ENCODE measurements at regions of chr10 and their contacts with region 1.

Region 1: GRCh38 chr10:48656241-48656913 is 28.3 kb upstream of the WDFY4 start:
- DNase-seq: peak; percentile 90
- ATAC-seq: peak; percentile 91
- H3K4me3 ChIP-seq: peak overlapping the region; percentile 68
- H3K27ac ChIP-seq: no peak overlapping the region
- H3K4me1 ChIP-seq: peaks cover 11% of the 10 kb centered on the region
- H3K27me3 ChIP-seq: no peaks in the 10 kb centered on the region
- CTCF ChIP-seq: peak; percentile 86 to 100 (median 96); a peak in 5 of 6 replicates
- EP300 ChIP-seq: no peak
- POLR2A ChIP-seq: 0 out of 2 replicates have a peak, but pooled peaks have one; percentile 43
- RAD21 ChIP-seq: peak; percentile 93

Region 2: GRCh38 chr10:48444266-48444665 is 212.1 kb before region 1 on chr10:
- CTCF ChIA-PET with region 1: interaction called, 4 read pairs
- POLR2A ChIA-PET with region 1: no interaction called
- RAD21 ChIA-PET with region 1: interaction called, 19 read pairs
- SMC1A ChIA-PET with region 1: no interaction called
- in situ Hi-C with region 1: no loop called
- intact Hi-C with region 1: no loop called
- DNase-seq: no peak
- ATAC-seq: no peak; the same call in 1 of the 3 replicates
- H3K4me3 ChIP-seq: no peak overlapping the region
- H3K27ac ChIP-seq: no peak overlapping the region
- H3K4me1 ChIP-seq: no peaks in the 10 kb centered on the region
- H3K27me3 ChIP-seq: no peaks in the 10 kb centered on the region; a peak in 1 of 4 replicates
- CTCF ChIP-seq: peak in 2 of 3 experiments; percentile 20 to 33; a peak in 2 of 6 replicates
- EP300 ChIP-seq: no peak
- POLR2A ChIP-seq: no peak
- RAD21 ChIP-seq: 0 out of 2 replicates have a peak, but pooled peaks have one; percentile 23

Region 3: DNA sequence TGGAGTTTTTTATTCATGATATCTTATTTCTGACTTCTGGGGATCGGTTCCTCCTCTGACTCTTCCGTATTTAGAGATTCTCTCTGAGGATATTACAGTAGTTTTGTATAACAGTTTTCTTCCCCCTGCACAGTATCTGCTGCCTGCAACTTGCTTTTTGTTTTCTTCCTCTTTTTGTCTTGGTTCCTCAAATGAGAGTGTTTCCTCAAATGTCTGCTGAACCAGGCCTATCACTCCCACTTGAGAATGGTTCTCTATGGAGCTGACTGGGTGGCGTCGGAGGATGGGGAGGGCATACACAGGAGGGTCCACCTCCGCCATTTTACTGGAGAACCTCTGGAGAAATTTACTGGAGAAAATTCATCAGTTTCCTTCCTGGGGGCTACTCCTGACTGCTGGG is 79.2 kb before region 1 on chr10:
- CTCF ChIA-PET with region 1: interaction called, 25 read pairs
- POLR2A ChIA-PET with region 1: no interaction called
- RAD21 ChIA-PET with region 1: interaction called, 14 read pairs
- SMC1A ChIA-PET with region 1: interaction called, 6 read pairs
- in situ Hi-C with region 1: no loop called
- intact Hi-C with region 1: no loop called
- DNase-seq: no peak
- ATAC-seq: peak; percentile 68
- H3K4me3 ChIP-seq: no peak overlapping the region
- H3K27ac ChIP-seq: peak overlapping the region; percentile 43; the same call in 1 of the 2 replicates
- H3K4me1 ChIP-seq: peaks cover 34% of the 10 kb centered on the region
- H3K27me3 ChIP-seq: no peaks in the 10 kb centered on the region
- CTCF ChIP-seq: no peak
- EP300 ChIP-seq: no peak
- POLR2A ChIP-seq: no peak
- RAD21 ChIP-seq: no peak

Region 4: GRCh38 chr10:48634198-48634983 is 22.0 kb before region 1 on chr10:
- CTCF ChIA-PET with region 1: interaction called, 45 read pairs
- POLR2A ChIA-PET with region 1: interaction called, 3 read pairs
- RAD21 ChIA-PET with region 1: interaction called, 48 read pairs
- SMC1A ChIA-PET with region 1: interaction called, 50 read pairs
- in situ Hi-C with region 1: no loop called
- intact Hi-C with region 1: no loop called
- DNase-seq: peak; percentile 91
- ATAC-seq: peak; percentile 97
- H3K4me3 ChIP-seq: no peak overlapping the region
- H3K27ac ChIP-seq: peak overlapping the region; percentile 45
- H3K4me1 ChIP-seq: peaks cover 38% of the 10 kb centered on the region
- H3K27me3 ChIP-seq: no peaks in the 10 kb centered on the region
- CTCF ChIP-seq: no peak
- EP300 ChIP-seq: peak; percentile 35 to 41; a peak in 1 of 4 replicates
- POLR2A ChIP-seq: no peak
- RAD21 ChIP-seq: no peak

Region 5: GRCh38 chr10:48714088-48714487 is 57.7 kb after region 1 on chr10:
- CTCF ChIA-PET with region 1: interaction called, 221 read pairs
- POLR2A ChIA-PET with region 1: no interaction called
- RAD21 ChIA-PET with region 1: interaction called, 171 read pairs
- SMC1A ChIA-PET with region 1: interaction called, 17 read pairs
- in situ Hi-C with region 1: no loop called
- intact Hi-C with region 1: no loop called
- DNase-seq: no peak
- ATAC-seq: no peak
- H3K4me3 ChIP-seq: no peak overlapping the region
- H3K27ac ChIP-seq: no peak overlapping the region
- H3K4me1 ChIP-seq: no peaks in the 10 kb centered on the region
- H3K27me3 ChIP-seq: no peaks in the 10 kb centered on the region
- CTCF ChIP-seq: no peak
- EP300 ChIP-seq: no peak
- POLR2A ChIP-seq: no peak
- RAD21 ChIP-seq: no peak

Region 6: GRCh38 chr10:48938990-48939536 is 282.7 kb after region 1 on chr10:
- CTCF ChIA-PET with region 1: interaction called, 11 read pairs
- POLR2A ChIA-PET with region 1: no interaction called
- RAD21 ChIA-PET with region 1: interaction called, 3 read pairs
- SMC1A ChIA-PET with region 1: interaction called, 3 read pairs
- in situ Hi-C with region 1: no loop called
- intact Hi-C with region 1: no loop called
- DNase-seq: no peak
- ATAC-seq: no peak
- H3K4me3 ChIP-seq: no peak overlapping the region
- H3K27ac ChIP-seq: no peak overlapping the region
- H3K4me1 ChIP-seq: no peaks in the 10 kb centered on the region
- H3K27me3 ChIP-seq: no peaks in the 10 kb centered on the region
- CTCF ChIP-seq: no peak
- EP300 ChIP-seq: no peak
- POLR2A ChIP-seq: no peak
- RAD21 ChIP-seq: no peak

Region 7: DNA sequence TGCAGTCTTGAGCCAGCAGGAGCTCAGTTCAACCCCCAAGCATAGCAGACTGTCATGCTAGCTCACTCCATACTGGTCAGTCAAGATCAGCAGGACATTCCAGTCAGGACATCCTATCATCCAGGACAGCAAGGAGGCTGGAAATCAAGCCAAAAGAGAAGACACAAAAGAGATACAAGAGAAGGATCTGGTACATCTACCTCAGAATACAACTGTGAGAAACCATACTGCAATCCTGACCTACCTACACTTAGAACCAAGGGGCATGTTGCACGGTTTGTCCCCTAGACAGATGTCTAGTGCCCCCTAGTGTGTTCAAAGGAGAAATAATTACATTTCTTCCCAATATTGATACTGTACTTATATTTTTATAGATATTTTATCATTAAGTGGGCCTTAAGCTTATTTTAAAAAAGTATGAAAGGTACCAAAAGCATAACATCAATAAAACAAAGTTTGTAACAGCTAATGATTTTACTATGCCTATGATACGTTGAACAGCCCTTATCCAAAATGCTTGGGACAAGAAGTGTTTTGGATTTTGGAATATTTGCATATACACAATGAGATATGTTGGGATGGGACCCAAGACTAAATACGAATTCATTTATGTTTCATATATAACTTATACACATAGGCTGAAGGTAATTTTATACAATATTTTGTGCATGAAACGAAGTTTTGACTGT is 855.9 kb after region 1 on chr10:
- CTCF ChIA-PET with region 1: interaction called, 67 read pairs
- POLR2A ChIA-PET with region 1: no interaction called
- RAD21 ChIA-PET with region 1: interaction called, 21 read pairs
- SMC1A ChIA-PET with region 1: interaction called, 19 read pairs
- in situ Hi-C with region 1: no loop called
- intact Hi-C with region 1: loop called (anchors 5 kb)
- DNase-seq: no peak
- ATAC-seq: peak; percentile 89
- H3K4me3 ChIP-seq: no peak overlapping the region
- H3K27ac ChIP-seq: no peak overlapping the region
- H3K4me1 ChIP-seq: no peaks in the 10 kb centered on the region; the same call in 1 of the 2 replicates
- H3K27me3 ChIP-seq: no peaks in the 10 kb centered on the region
- CTCF ChIP-seq: peak; percentile 60 to 77 (median 64)
- EP300 ChIP-seq: no peak
- POLR2A ChIP-seq: no peak
- RAD21 ChIP-seq: peak; percentile 76

Measured in GM12878 (cell line).